CD8-positive, alpha-beta T cell (primary cell): ENCODE measurements at regions of chr3 and their contacts with region 1.

Region 1: GRCh38 chr3:9503283-9503682 is 50.3 kb downstream of the LHFPL4 start:
- DNase-seq: peak; percentile 45 to 79 (median 67)
- ATAC-seq: peak; percentile 68
- H3K4me3 ChIP-seq: no peak overlapping the region
- H3K4me3 Mint-ChIP-seq: no peak overlapping the region
- H3K27ac ChIP-seq: no peak overlapping the region
- H3K27ac Mint-ChIP-seq: no peak overlapping the region
- H3K4me1 ChIP-seq: peaks cover 14% of the 10 kb centered on the region
- H3K4me1 Mint-ChIP-seq: peaks cover 8% of the 10 kb centered on the region
- H3K27me3 ChIP-seq: peaks cover 17% of the 10 kb centered on the region in 2 experiments
- H3K27me3 Mint-ChIP-seq: peaks cover 37% of the 10 kb centered on the region
- CTCF ChIP-seq: peak; percentile 69

Region 2: GRCh38 chr3:9172851-9173321 is 330.4 kb before region 1 on chr3:
- CTCF ChIA-PET with region 1: no interaction called
- POLR2A ChIA-PET with region 1: no interaction called
- intact Hi-C with region 1: no loop called
- DNase-seq: no peak
- ATAC-seq: no peak
- H3K4me3 ChIP-seq: no peak overlapping the region
- H3K4me3 Mint-ChIP-seq: no peak overlapping the region
- H3K27ac ChIP-seq: no peak overlapping the region
- H3K27ac Mint-ChIP-seq: no peak overlapping the region
- H3K4me1 ChIP-seq: peaks cover 24% of the 10 kb centered on the region
- H3K4me1 Mint-ChIP-seq: peaks cover 35% of the 10 kb centered on the region
- H3K27me3 ChIP-seq: no peaks in the 10 kb centered on the region
- H3K27me3 Mint-ChIP-seq: no peaks in the 10 kb centered on the region
- CTCF ChIP-seq: no peak

Region 3: GRCh38 chr3:9514956-9515355 is 11.7 kb after region 1 on chr3:
- CTCF ChIA-PET with region 1: interaction called, 12 read pairs
- POLR2A ChIA-PET with region 1: no interaction called
- intact Hi-C with region 1: no loop called
- DNase-seq: no peak
- ATAC-seq: no peak
- H3K4me3 ChIP-seq: no peak overlapping the region
- H3K4me3 Mint-ChIP-seq: no peak overlapping the region
- H3K27ac ChIP-seq: no peak overlapping the region
- H3K27ac Mint-ChIP-seq: no peak overlapping the region
- H3K4me1 ChIP-seq: no peaks in the 10 kb centered on the region
- H3K4me1 Mint-ChIP-seq: no peaks in the 10 kb centered on the region
- H3K27me3 ChIP-seq: peaks cover 0 to 6% of the 10 kb centered on the region in 2 experiments
- H3K27me3 Mint-ChIP-seq: peaks cover 12% of the 10 kb centered on the region
- CTCF ChIP-seq: no peak

Region 4: DNA sequence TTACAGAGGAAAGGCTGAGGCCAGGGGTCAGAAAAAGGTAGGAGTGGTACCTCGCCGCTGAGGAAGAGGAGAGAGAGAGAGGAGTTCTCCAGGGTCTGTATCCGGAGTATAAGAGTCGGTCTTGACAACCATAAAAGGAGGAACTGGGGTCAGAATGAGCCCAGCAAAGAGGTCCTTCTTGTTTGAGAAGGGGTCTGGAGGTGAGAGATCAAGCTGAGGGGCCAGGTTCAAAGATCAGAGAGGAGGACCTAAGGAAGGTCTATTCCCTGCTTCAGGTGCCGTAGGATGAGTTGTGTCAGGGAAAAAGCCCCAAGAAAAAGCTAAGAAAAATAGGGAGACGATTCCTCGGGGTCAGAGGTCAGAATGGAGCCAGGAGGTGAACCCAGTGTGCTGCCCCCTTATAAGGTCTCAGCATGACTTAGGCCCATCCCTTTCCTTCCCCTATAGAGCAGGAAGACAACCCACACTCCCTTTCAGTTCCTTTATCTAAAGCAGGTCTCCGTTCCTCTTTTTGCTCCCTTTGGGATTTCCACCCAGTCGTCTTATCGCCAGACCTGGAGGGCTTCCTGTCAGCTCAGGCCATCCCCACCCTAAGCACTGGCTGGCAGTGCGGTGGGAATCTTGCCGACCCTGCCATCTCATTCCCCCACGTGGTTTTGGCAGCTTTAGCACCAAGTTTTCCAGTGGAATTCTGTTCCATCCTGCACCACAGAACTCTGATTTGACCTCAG is 146.7 kb after region 1 on chr3:
- CTCF ChIA-PET with region 1: no interaction called
- POLR2A ChIA-PET with region 1: no interaction called
- intact Hi-C with region 1: loop called in 1 of 2 experiments (anchors 5 kb)
- DNase-seq: peak in 2 of 9 experiments; percentile 10 to 42
- ATAC-seq: no peak
- H3K4me3 ChIP-seq: peak overlapping the region; percentile 90 to 91
- H3K4me3 Mint-ChIP-seq: peak overlapping the region; percentile 93
- H3K27ac ChIP-seq: peak overlapping the region; percentile 88 to 94
- H3K27ac Mint-ChIP-seq: peak overlapping the region; percentile 97
- H3K4me1 ChIP-seq: peaks cover 27% of the 10 kb centered on the region
- H3K4me1 Mint-ChIP-seq: peaks cover 39% of the 10 kb centered on the region
- H3K27me3 ChIP-seq: no peaks in the 10 kb centered on the region
- H3K27me3 Mint-ChIP-seq: no peaks in the 10 kb centered on the region
- CTCF ChIP-seq: no peak